ENCODE measurements at regions of chr5 and their contacts with region 1.

Region 1: GRCh38 chr5:90161414-90161813 is 248.1 kb downstream of the CETN3 start:
- DNase-seq: peak; percentile 67
- ATAC-seq: peak; percentile 98
- H3K4me3 Mint-ChIP-seq: no peak overlapping the region
- H3K27ac Mint-ChIP-seq: no peak overlapping the region
- H3K4me1 Mint-ChIP-seq: peaks cover 25% of the 10 kb centered on the region
- H3K27me3 Mint-ChIP-seq: no peaks in the 10 kb centered on the region
- CTCF ChIP-seq: 0 out of 2 replicates have a peak, but pooled peaks have one; percentile 30

Region 2: GRCh38 chr5:88729084-88729828 is 1432.2 kb before region 1 on chr5:
- CTCF ChIA-PET with region 1: interaction called, 12 read pairs
- POLR2A ChIA-PET with region 1: no interaction called
- DNase-seq: peak; percentile 65
- ATAC-seq: peak; percentile 77
- H3K4me3 Mint-ChIP-seq: no peak overlapping the region
- H3K27ac Mint-ChIP-seq: no peak overlapping the region
- H3K4me1 Mint-ChIP-seq: peaks cover 24% of the 10 kb centered on the region
- H3K27me3 Mint-ChIP-seq: no peaks in the 10 kb centered on the region
- CTCF ChIP-seq: peak; percentile 65

Region 3: DNA sequence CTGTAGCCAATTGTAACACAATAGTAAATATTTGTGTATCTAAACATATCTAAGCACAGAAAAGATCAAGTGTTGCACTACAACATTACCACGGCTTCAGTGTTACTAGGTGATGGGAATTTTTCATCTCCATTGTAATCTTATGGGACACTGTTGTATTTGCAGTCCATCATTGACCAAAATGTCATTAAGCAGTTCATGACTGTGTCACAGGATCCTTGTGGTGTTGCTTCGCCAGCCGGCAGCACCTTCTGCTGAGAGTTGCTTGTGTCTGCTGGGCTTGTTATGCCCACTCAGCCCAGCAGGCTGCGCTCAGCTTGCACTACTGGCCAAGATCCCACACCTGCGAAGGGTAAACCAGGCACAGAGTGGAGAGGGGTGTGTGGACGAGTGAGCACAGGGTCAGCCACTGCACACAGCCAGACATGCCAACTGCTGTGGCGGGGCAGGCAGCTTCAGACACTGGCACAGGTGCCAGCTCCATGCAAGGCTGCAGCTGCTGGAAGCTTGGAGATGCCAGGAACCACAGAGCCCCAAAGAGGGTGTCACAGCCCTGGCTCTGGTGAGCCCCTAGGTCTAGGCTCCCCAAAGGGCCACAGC is 25.5 kb before region 1 on chr5:
- CTCF ChIA-PET with region 1: interaction called, 12 read pairs
- POLR2A ChIA-PET with region 1: no interaction called
- DNase-seq: peak; percentile 68
- ATAC-seq: peak; percentile 99
- H3K4me3 Mint-ChIP-seq: no peak overlapping the region
- H3K27ac Mint-ChIP-seq: no peak overlapping the region
- H3K4me1 Mint-ChIP-seq: peaks cover 11% of the 10 kb centered on the region
- H3K27me3 Mint-ChIP-seq: no peaks in the 10 kb centered on the region
- CTCF ChIP-seq: peak; percentile 74

Region 4: GRCh38 chr5:90182734-90183133 is 21.3 kb after region 1 on chr5:
- CTCF ChIA-PET with region 1: interaction called, 11 read pairs
- POLR2A ChIA-PET with region 1: no interaction called
- DNase-seq: no peak
- ATAC-seq: no peak
- H3K4me3 Mint-ChIP-seq: no peak overlapping the region
- H3K27ac Mint-ChIP-seq: no peak overlapping the region
- H3K4me1 Mint-ChIP-seq: no peaks in the 10 kb centered on the region
- H3K27me3 Mint-ChIP-seq: no peaks in the 10 kb centered on the region
- CTCF ChIP-seq: no peak